Right ventricle myocardium inferior (tissue), 1 donor: ENCODE measurements at regions of chr19 and their contacts with region 1.

Region 1: GRCh38 chr19:2944775-2945574 is at the start of gene ZNF77:
- DNase-seq: peak; percentile 97
- ATAC-seq: peak; percentile 99
- total RNA-seq, gene ZNF77: 2.6 TPM

Region 2: DNA sequence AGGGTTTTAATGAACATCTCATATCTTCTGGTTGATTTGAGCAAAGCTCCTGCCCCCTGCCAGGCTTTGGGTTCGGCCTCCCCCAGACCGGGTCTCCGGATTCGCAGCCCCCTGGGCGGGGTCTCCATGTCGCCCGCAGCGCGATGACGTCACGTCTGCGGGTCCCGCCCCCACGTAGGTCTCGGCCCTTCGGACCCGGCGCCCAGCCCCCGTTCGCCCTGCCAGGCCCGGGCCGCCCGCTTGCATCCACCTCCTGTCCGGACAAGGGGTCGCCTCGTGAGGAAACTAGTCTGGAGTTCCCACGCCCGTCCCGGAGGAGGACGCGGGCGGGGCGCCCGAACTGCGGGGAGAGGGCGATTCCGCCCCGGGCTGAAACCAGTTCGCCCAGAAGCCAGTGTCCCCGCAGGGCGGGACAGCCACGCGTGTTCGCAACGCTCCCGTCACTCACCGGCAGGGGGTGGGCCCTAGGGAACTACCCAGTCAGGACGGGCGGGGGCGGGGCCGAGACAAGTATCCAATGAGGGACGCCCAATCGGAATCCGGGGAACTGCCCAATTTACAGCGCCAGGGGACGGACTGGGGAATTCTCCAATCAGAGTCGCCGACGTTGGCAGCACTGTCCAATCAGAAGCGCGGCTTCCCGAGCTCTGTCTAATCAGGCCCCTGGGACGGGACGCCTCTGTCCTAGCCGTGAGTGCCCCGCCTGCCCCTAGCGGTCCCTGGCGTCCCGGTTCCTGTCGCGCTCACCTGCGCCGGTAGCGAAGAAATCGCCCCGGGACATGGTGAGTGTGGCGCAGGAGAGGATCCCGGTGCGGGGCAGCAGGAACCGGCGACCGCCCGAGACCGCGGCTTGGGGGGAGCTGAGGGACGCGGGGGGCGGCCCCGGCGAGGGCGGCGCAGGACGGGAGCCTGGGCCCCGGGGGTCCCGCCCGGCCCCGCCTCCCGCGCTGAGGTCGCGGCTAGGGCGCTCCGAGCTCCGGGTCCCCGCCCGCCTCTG is 103.9 kb before region 1 on chr19 and contains the start of gene ZNF555:
- intact Hi-C with region 1: loop called (anchors 5 kb)
- DNase-seq: peak; percentile 99
- ATAC-seq: peak; percentile 98
- total RNA-seq, gene ZNF555: 8.9 TPM

Region 3: DNA sequence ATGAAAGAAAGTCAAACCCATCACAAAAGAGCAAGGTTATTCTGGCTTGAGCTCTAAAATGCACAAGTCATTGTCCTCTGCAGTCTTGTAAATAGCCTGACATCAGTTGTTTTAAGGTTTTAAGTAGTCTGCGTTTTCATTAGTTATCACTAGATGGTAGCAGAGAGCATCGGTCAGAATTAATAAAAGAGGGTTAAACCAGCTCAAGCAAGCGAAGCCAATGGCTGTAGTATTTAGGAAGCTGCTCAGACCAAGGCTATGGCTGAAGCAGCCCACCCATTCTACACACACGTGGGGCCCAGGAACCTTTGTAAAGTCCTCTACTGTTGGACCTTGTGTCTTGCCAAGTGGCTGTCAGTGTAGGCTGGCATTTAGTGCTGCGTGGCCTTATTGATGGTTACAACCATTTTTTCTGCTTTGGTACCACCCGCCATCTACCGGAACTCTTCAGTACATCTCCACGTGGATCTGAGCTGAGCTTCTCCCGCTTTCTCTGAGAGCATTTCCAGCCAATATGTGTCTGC is 57.5 kb before region 1 on chr19:
- intact Hi-C with region 1: loop called (anchors 5 kb)
- DNase-seq: no peak
- ATAC-seq: peak; percentile 70

Region 4: GRCh38 chr19:2900296-2901252 is 44.4 kb before region 1 on chr19 and contains the start of gene ZNF57:
- intact Hi-C with region 1: loop called (anchors 2 kb)
- DNase-seq: peak; percentile 100
- ATAC-seq: peak; percentile 99
- total RNA-seq, gene ZNF57: 5.1 TPM